ENCODE measurements at regions of chr9 and their contacts with region 1.

Region 1: GRCh38 chr9:79026316-79026715 is 545.4 kb upstream of the TLE4 start:
- DNase-seq: no peak
- ATAC-seq: no peak
- H3K4me3 ChIP-seq: no peak overlapping the region
- H3K27ac ChIP-seq: no peak overlapping the region
- H3K4me1 ChIP-seq: peaks cover 46% of the 10 kb centered on the region
- H3K27me3 ChIP-seq: no peaks in the 10 kb centered on the region
- CTCF ChIP-seq: no peak

Region 2: GRCh38 chr9:78725503-78725902 is 300.8 kb before region 1 on chr9:
- CTCF ChIA-PET with region 1: no interaction called
- POLR2A ChIA-PET with region 1: no interaction called
- intact Hi-C with region 1: loop called (anchors 10 kb)
- DNase-seq: no peak
- ATAC-seq: no peak
- H3K4me3 ChIP-seq: no peak overlapping the region
- H3K27ac ChIP-seq: no peak overlapping the region
- H3K4me1 ChIP-seq: peaks cover 9% of the 10 kb centered on the region
- H3K27me3 ChIP-seq: no peaks in the 10 kb centered on the region
- CTCF ChIP-seq: no peak

Region 3: GRCh38 chr9:78866207-78867132 is 159.8 kb before region 1 on chr9:
- CTCF ChIA-PET with region 1: no interaction called
- POLR2A ChIA-PET with region 1: interaction called, 3 read pairs
- intact Hi-C with region 1: loop called (anchors 5 kb)
- DNase-seq: peak; percentile 94
- ATAC-seq: peak; percentile 79
- H3K4me3 ChIP-seq: no peak overlapping the region
- H3K27ac ChIP-seq: peak overlapping the region; percentile 94
- H3K4me1 ChIP-seq: peaks cover 33% of the 10 kb centered on the region
- H3K27me3 ChIP-seq: no peaks in the 10 kb centered on the region
- CTCF ChIP-seq: no peak

Region 4: GRCh38 chr9:78921341-78921740 is 105.0 kb before region 1 on chr9:
- CTCF ChIA-PET with region 1: no interaction called
- POLR2A ChIA-PET with region 1: no interaction called
- intact Hi-C with region 1: loop called (anchors 5 kb)
- DNase-seq: no peak
- ATAC-seq: no peak
- H3K4me3 ChIP-seq: no peak overlapping the region
- H3K27ac ChIP-seq: no peak overlapping the region
- H3K4me1 ChIP-seq: peaks cover 51% of the 10 kb centered on the region
- H3K27me3 ChIP-seq: no peaks in the 10 kb centered on the region
- CTCF ChIP-seq: no peak

Region 5: DNA sequence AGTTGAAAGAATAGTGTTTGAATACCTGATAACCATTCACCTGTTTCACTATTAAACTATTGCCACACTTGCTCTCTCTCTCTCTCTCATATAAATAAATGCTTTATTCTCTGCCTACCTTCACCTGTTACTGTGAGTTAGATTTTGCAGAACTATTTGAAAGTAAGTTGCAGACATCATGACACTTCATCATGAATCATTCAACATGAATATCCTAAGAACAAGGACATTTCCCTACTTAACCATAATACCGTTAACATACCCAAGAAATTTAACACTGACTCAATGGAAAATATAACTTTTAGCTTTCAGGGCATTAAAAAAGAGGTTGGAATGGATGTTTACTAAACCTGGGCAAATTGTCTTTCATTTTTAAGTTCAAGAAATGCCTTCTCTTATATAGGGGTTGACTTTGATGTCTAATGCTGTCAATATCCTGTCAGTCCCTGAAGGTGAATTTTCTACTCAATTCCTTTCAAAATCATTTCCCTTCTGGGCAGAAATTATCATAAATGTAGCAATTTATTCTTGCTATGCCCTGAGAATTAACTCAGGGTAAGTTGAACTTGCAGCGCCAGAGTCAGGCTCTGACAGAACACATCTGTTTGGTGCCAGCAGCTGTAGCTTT is 37.2 kb before region 1 on chr9:
- CTCF ChIA-PET with region 1: no interaction called
- POLR2A ChIA-PET with region 1: no interaction called
- intact Hi-C with region 1: loop called (anchors 2 kb)
- DNase-seq: peak; percentile 55
- ATAC-seq: peak; percentile 52
- H3K4me3 ChIP-seq: no peak overlapping the region
- H3K27ac ChIP-seq: no peak overlapping the region
- H3K4me1 ChIP-seq: peaks cover 66% of the 10 kb centered on the region
- H3K27me3 ChIP-seq: no peaks in the 10 kb centered on the region
- CTCF ChIP-seq: no peak

Region 6: GRCh38 chr9:79254900-79255650 is 228.8 kb after region 1 on chr9:
- CTCF ChIA-PET with region 1: no interaction called
- POLR2A ChIA-PET with region 1: no interaction called
- intact Hi-C with region 1: no loop called
- DNase-seq: peak; percentile 29
- ATAC-seq: no peak
- H3K4me3 ChIP-seq: no peak overlapping the region
- H3K27ac ChIP-seq: no peak overlapping the region
- H3K4me1 ChIP-seq: peaks cover 10% of the 10 kb centered on the region
- H3K27me3 ChIP-seq: no peaks in the 10 kb centered on the region
- CTCF ChIP-seq: peak; percentile 48; the same call in 1 of the 2 replicates

Measured in PC-3 (cell line).